Naive thymus-derived CD4-positive, alpha-beta T cell (primary cell): ENCODE measurements at regions of chr1 and their contacts with region 1.

Region 1: DNA sequence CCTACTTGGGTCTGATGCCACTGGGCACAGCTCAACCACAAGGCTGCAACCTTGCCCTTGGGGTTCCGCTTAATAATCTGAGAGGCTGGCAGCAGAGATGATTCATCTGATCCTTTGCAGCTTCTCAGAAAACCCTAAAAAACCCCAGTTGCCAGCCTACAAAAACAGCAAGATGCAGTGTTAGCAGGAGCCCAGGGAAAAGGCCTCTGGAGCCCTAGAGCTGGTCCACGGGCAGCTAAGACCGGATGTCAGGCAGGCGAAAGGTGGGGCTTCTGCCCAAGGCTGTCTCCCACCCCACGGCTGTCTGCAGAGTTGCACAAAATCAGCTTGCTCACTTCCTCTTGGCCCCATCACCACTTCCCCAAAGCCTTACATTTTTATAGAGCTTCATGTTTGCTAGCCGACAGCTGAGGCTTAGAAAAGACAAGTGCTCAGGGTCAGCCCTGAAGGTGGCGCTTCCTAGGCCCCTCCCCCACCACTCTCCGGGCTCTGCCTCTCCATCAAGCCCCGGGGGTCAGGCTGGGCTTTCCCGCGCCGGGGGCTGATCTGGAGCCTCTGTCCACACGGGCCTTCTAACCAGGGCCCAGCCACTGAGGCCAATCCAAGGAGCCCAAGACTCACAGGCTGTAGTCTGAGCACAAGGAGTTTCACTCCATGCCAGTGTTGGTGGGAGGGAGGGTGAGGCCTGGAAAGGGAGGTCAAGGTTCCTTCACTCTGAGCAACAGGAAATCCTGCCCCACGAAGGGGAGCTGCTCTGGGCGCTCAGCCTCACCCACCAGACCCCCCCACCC is 4.2 kb upstream of the ADORA3 start:
- DNase-seq: peak; percentile 35 to 62 (median 40)
- ATAC-seq: peak; percentile 76
- H3K4me3 ChIP-seq: peak overlapping the region; percentile 53
- H3K4me3 Mint-ChIP-seq: peak overlapping the region; percentile 72 to 86 (median 82)
- H3K27ac ChIP-seq: peak overlapping the region; percentile 74
- H3K27ac Mint-ChIP-seq: peak overlapping the region in 8 of 9 donors; percentile 88 to 97 (median 94)
- H3K4me1 ChIP-seq: peaks cover 64 to 83% of the 10 kb centered on the region in 2 donors
- H3K4me1 Mint-ChIP-seq: peaks cover 42 to 65% (median 60%) of the 10 kb centered on the region in 7 donors
- H3K27me3 ChIP-seq: no peaks in the 10 kb centered on the region
- H3K27me3 Mint-ChIP-seq: no peaks in the 10 kb centered on the region

Region 2: DNA sequence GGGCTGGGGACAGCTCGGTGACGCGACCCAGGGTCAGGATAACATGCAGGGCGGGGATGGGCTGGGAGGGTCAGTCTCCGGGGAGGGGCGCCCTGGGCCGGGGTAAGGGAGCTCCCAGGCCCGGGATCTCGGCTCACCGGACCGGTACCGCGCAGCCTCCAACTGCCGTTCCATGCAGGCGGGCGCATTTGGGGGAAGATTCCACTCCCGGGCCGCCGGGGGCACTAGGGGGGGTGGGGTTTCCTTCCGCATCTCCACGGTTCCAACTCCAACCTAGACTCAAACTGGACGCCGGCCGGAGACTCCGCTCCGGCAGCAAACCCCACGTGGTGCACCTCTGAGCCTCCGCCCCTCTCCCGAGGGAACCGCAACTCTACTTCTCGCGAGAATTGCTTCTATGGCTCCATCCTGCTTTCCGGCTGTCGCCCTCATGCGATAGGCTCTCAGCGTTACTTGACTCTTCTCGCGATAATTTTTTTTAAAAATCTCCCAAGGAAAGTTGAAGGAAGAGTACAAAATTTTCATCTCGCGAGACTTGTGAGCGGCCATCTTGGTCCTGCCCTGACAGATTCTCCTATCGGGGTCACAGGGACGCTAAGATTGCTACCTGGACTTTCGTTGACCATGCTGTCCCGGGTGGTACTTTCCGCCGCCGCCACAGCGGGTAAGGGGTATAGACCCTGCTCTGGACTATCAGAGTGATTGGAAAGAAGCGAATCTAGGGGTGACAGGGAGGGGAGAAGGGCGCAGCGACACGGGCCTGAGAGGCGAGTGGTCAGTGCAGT is 58.5 kb before region 1 on chr1 and contains the starts of genes ATP5PB and WDR77:
- CTCF ChIA-PET with region 1: interaction called, 7 read pairs
- POLR2A ChIA-PET with region 1: interaction called, 12 read pairs
- intact Hi-C with region 1: loop called (anchors 1 kb)
- DNase-seq: peak; percentile 66 to 97 (median 94)
- ATAC-seq: peak; percentile 98
- H3K4me3 ChIP-seq: peak within 1 kb of the TSS; percentile 89
- H3K4me3 Mint-ChIP-seq: peak within 1 kb of the TSS; percentile 97 to 100 (median 100)
- H3K27ac ChIP-seq: peak within 1 kb of the TSS; percentile 98
- H3K27ac Mint-ChIP-seq: peak within 1 kb of the TSS; percentile 95 to 100 (median 99)
- H3K4me1 ChIP-seq: peaks cover 51 to 55% of the 10 kb centered on the region in 2 donors
- H3K4me1 Mint-ChIP-seq: peaks cover 43 to 92% (median 78%) of the 10 kb centered on the region in 7 donors
- H3K27me3 ChIP-seq: no peaks in the 10 kb centered on the region
- H3K27me3 Mint-ChIP-seq: no peaks in the 10 kb centered on the region
- total RNA-seq, gene ATP5PB: 64.9 to 298 (median 98.7) TPM
- total RNA-seq, gene WDR77: 20.7 to 39.9 (median 29.5) TPM

Region 3: DNA sequence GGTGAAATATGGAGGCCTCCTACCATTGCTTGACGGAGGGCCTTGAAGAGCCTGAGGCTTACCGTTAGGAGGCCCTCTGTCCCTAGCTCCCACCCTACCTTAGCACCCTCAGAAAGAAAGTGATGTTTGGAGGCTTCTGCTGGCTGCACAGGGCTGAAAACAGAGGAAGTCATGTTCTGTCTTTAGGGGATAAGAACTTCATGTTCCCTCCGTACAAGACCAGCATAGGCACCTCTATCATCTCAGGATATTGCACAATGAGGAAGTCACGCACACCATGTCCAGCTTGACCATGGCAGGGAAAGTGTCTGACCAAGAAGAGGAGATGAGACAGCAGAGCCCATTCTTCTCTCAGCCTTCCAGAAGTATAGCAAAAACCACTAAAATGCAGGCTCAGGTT is 18.0 kb before region 1 on chr1:
- CTCF ChIA-PET with region 1: interaction called, 4 read pairs
- POLR2A ChIA-PET with region 1: interaction called, 12 read pairs
- intact Hi-C with region 1: no loop called
- DNase-seq: no peak
- ATAC-seq: peak; percentile 65
- H3K4me3 ChIP-seq: no peak overlapping the region
- H3K4me3 Mint-ChIP-seq: no peak overlapping the region
- H3K27ac ChIP-seq: no peak overlapping the region
- H3K27ac Mint-ChIP-seq: no peak overlapping the region
- H3K4me1 ChIP-seq: no peaks in the 10 kb centered on the region
- H3K4me1 Mint-ChIP-seq: peaks cover 0 to 6% (median 0%) of the 10 kb centered on the region in 7 donors
- H3K27me3 ChIP-seq: no peaks in the 10 kb centered on the region
- H3K27me3 Mint-ChIP-seq: peaks cover 0 to 11% (median 0%) of the 10 kb centered on the region in 5 donors

Region 4: GRCh38 chr1:111603979-111604378 is 96.4 kb after region 1 on chr1:
- CTCF ChIA-PET with region 1: interaction called, 8 read pairs
- POLR2A ChIA-PET with region 1: interaction called, 4 read pairs
- intact Hi-C with region 1: loop called in 1 of 2 experiments (anchors 2 kb)
- DNase-seq: peak; percentile 33 to 88 (median 80)
- ATAC-seq: peak; percentile 99
- H3K4me3 ChIP-seq: no peak overlapping the region
- H3K4me3 Mint-ChIP-seq: peak overlapping the region; percentile 44 to 84 (median 72)
- H3K27ac ChIP-seq: peak overlapping the region; percentile 57
- H3K27ac Mint-ChIP-seq: peak overlapping the region; percentile 83 to 98 (median 89)
- H3K4me1 ChIP-seq: peaks cover 49 to 77% of the 10 kb centered on the region in 2 donors
- H3K4me1 Mint-ChIP-seq: peaks cover 48 to 77% (median 74%) of the 10 kb centered on the region in 7 donors
- H3K27me3 ChIP-seq: no peaks in the 10 kb centered on the region
- H3K27me3 Mint-ChIP-seq: no peaks in the 10 kb centered on the region

Region 5: GRCh38 chr1:111648806-111649205 is 141.2 kb after region 1 on chr1:
- CTCF ChIA-PET with region 1: interaction called, 17 read pairs
- POLR2A ChIA-PET with region 1: interaction called, 3 read pairs
- intact Hi-C with region 1: no loop called
- DNase-seq: no peak
- ATAC-seq: no peak
- H3K4me3 ChIP-seq: no peak overlapping the region
- H3K4me3 Mint-ChIP-seq: peak overlapping the region in 8 of 10 donors; percentile 56 to 88 (median 66)
- H3K27ac ChIP-seq: no peak overlapping the region
- H3K27ac Mint-ChIP-seq: peak overlapping the region; percentile 28 to 86 (median 77)
- H3K4me1 ChIP-seq: peaks cover 41 to 52% of the 10 kb centered on the region in 2 donors
- H3K4me1 Mint-ChIP-seq: peaks cover 62 to 96% (median 85%) of the 10 kb centered on the region in 7 donors
- H3K27me3 ChIP-seq: no peaks in the 10 kb centered on the region
- H3K27me3 Mint-ChIP-seq: no peaks in the 10 kb centered on the region

Region 6: DNA sequence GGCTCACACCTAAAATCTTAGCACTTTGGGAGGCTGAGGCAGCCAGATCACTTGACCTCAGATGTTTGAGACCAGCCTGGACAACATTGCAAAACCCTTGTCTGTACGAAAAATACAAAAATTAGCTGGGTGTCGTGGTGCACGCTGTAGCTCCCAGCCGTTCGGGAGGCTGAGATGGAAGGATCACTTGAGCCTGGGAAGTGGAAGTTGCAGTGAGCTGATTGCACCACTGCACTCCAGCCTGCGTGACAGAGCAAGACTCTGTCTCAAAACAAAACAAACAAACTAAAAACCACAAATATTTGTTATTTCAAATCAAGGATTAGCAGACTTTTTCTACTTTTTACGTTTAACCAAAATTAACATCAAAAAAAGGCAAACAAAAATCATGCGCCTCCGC is 200.3 kb after region 1 on chr1:
- CTCF ChIA-PET with region 1: interaction called, 19 read pairs
- POLR2A ChIA-PET with region 1: interaction called, 6 read pairs
- intact Hi-C with region 1: loop called in 1 of 2 experiments (anchors 1 kb)
- DNase-seq: no peak
- ATAC-seq: no peak
- H3K4me3 ChIP-seq: no peak overlapping the region
- H3K4me3 Mint-ChIP-seq: no peak overlapping the region
- H3K27ac ChIP-seq: no peak overlapping the region
- H3K27ac Mint-ChIP-seq: peak overlapping the region in 6 of 9 donors; percentile 21 to 77 (median 52)
- H3K4me1 ChIP-seq: no peaks in the 10 kb centered on the region
- H3K4me1 Mint-ChIP-seq: peaks cover 0 to 23% (median 3%) of the 10 kb centered on the region in 7 donors
- H3K27me3 ChIP-seq: no peaks in the 10 kb centered on the region
- H3K27me3 Mint-ChIP-seq: no peaks in the 10 kb centered on the region

Region 7: DNA sequence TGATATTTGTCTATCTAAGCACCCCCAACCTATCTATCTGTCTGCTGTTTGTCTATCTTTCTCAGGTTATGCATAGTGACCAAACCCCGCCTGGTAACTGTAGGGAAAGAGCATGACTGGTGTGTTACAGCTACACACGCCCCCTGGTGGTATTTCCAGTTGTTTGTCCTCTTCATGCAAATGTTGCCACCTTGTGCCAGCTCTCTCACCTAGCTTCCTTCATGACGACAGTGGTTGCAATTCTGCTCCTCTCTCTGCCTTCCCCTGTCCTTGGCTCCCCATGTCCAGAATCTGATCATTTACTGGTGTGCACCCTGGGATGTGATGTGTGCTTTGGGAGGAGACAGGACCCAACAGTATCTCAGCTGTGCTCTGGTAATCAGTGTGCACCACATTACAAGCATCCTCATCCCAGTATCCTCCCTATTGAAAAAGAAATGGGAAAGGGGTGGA is 239.7 kb after region 1 on chr1:
- CTCF ChIA-PET with region 1: interaction called, 9 read pairs
- POLR2A ChIA-PET with region 1: interaction called, 11 read pairs
- intact Hi-C with region 1: loop called (anchors 1 to 2 kb)
- DNase-seq: peak in 8 of 9 donors; percentile 10 to 61 (median 43)
- ATAC-seq: peak; percentile 85
- H3K4me3 ChIP-seq: no peak overlapping the region
- H3K4me3 Mint-ChIP-seq: no peak overlapping the region
- H3K27ac ChIP-seq: no peak overlapping the region
- H3K27ac Mint-ChIP-seq: no peak overlapping the region
- H3K4me1 ChIP-seq: no peaks in the 10 kb centered on the region
- H3K4me1 Mint-ChIP-seq: peaks cover 0 to 21% (median 0%) of the 10 kb centered on the region in 7 donors
- H3K27me3 ChIP-seq: no peaks in the 10 kb centered on the region
- H3K27me3 Mint-ChIP-seq: peaks cover 0 to 23% (median 0%) of the 10 kb centered on the region in 5 donors

Region 8: DNA sequence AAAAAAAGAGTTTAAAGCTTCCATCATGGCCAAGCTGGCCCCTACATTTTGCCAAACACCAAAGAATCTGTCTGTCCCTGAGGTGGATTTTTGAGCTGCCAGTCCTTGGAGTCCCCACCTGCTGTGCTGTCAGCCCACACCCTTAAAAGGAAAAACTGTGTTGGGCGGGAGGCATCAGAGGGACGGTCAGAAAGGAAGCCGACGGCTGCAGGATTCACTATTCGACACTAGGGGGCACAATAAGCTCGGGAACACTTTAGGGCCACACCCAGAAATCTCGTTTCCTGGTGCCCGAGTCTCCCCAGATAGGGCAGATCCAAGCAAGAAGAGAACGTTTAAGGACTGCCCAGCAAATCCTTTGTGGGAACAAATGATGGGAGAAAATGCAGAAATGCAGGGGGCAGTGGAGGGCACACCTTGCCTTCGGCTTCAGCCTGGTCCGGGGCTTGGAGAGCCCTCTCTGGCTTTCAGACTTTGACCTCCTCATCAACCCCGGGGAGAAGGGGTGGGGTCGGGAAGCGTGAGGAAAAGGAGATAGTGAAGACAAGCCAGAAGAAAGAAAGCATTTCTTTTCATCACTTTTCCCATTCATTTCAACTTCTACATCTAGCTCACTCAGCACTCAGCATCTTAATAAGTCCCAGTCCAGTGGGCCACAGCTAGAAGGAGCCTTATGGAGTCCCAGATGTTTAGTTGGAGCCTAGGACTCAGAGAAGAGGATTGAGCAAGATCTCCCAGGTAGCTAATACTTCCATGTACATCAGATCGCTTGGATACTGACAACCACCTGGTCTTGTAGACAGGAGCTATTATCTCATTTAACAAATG is 883.4 kb after region 1 on chr1:
- CTCF ChIA-PET with region 1: no interaction called
- POLR2A ChIA-PET with region 1: no interaction called
- intact Hi-C with region 1: no loop called
- DNase-seq: peak; percentile 49 to 78 (median 75)
- ATAC-seq: peak; percentile 90
- H3K4me3 ChIP-seq: no peak overlapping the region
- H3K4me3 Mint-ChIP-seq: peak overlapping the region in 5 of 10 donors; percentile 7 to 78 (median 54)
- H3K27ac ChIP-seq: no peak overlapping the region
- H3K27ac Mint-ChIP-seq: peak overlapping the region in 1 of 9 donors; percentile 62
- H3K4me1 ChIP-seq: peaks cover 7 to 9% of the 10 kb centered on the region in 2 donors
- H3K4me1 Mint-ChIP-seq: peaks cover 7 to 34% (median 15%) of the 10 kb centered on the region in 7 donors
- H3K27me3 ChIP-seq: no peaks in the 10 kb centered on the region
- H3K27me3 Mint-ChIP-seq: peaks cover 9 to 50% (median 39%) of the 10 kb centered on the region in 5 donors